ENCODE measurements at regions of chr3 and their contacts with region 1.

Region 1: GRCh38 chr3:152444029-152444641 is 175.4 kb downstream of the MBNL1 start:
- DNase-seq: peak; percentile 27
- H3K4me3 ChIP-seq: no peak overlapping the region; a peak in 1 of 4 replicates
- H3K27ac ChIP-seq: peak overlapping the region in 1 of 2 experiments; percentile 54; a peak in 2 of 4 replicates
- H3K4me1 ChIP-seq: peaks cover 0 to 19% of the 10 kb centered on the region in 2 experiments; a peak in 2 of 4 replicates
- H3K27me3 ChIP-seq: no peaks in the 10 kb centered on the region
- CTCF ChIP-seq: peak; percentile 81
- EP300 ChIP-seq: no peak
- RAD21 ChIP-seq: peak; percentile 91

Region 2: GRCh38 chr3:152071924-152072323 is 372.2 kb before region 1 on chr3:
- CTCF ChIA-PET with region 1: interaction called, 35 read pairs
- POLR2A ChIA-PET with region 1: no interaction called
- DNase-seq: peak; percentile 20
- H3K4me3 ChIP-seq: no peak overlapping the region
- H3K27ac ChIP-seq: no peak overlapping the region
- H3K4me1 ChIP-seq: peaks cover 0 to 3% of the 10 kb centered on the region in 2 experiments; a peak in 1 of 4 replicates
- H3K27me3 ChIP-seq: no peaks in the 10 kb centered on the region
- CTCF ChIP-seq: peak; percentile 45; the same call in 1 of the 2 replicates
- EP300 ChIP-seq: no peak
- RAD21 ChIP-seq: peak; percentile 66

Region 3: DNA sequence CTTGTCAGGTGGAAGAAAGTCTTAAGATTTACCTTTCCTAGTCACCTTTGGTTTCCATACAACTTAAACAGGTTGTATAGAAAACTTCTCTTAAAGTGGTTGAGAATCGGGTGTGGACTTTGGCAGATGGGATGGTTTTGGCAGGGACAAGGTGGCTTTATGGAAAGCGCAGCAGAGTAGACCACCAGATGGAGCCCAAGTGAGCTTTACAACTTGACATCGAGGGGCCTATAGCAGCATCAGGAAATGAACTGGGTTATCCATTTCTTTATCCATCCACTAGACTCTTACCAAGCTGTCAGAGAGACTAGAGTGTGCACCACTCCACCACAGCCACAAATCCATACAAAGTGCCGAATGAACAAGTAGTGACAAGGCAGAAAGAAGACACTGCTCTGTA is 260.7 kb before region 1 on chr3:
- CTCF ChIA-PET with region 1: interaction called, 143 read pairs
- POLR2A ChIA-PET with region 1: interaction called, 5 read pairs
- DNase-seq: peak; percentile 34
- H3K4me3 ChIP-seq: no peak overlapping the region; a peak in 1 of 4 replicates
- H3K27ac ChIP-seq: no peak overlapping the region
- H3K4me1 ChIP-seq: peaks cover 0 to 12% of the 10 kb centered on the region in 2 experiments; a peak in 2 of 4 replicates
- H3K27me3 ChIP-seq: no peaks in the 10 kb centered on the region
- CTCF ChIP-seq: peak; percentile 58
- EP300 ChIP-seq: no peak
- RAD21 ChIP-seq: peak; percentile 77

Region 4: GRCh38 chr3:152430223-152431002 is 13.7 kb before region 1 on chr3:
- CTCF ChIA-PET with region 1: interaction called, 16 read pairs
- POLR2A ChIA-PET with region 1: no interaction called
- DNase-seq: no peak
- H3K4me3 ChIP-seq: no peak overlapping the region; a peak in 1 of 4 replicates
- H3K27ac ChIP-seq: peak overlapping the region; percentile 63 to 64; a peak in 2 of 4 replicates
- H3K4me1 ChIP-seq: peaks cover 10 to 14% of the 10 kb centered on the region in 2 experiments
- H3K27me3 ChIP-seq: no peaks in the 10 kb centered on the region
- CTCF ChIP-seq: no peak
- EP300 ChIP-seq: peak in 1 of 2 experiments; percentile 30; a peak in 1 of 4 replicates
- RAD21 ChIP-seq: no peak

Region 5: GRCh38 chr3:152471814-152472671 is 27.9 kb after region 1 on chr3:
- CTCF ChIA-PET with region 1: interaction called, 12 read pairs
- POLR2A ChIA-PET with region 1: no interaction called
- DNase-seq: peak; percentile 49
- H3K4me3 ChIP-seq: peak overlapping the region in 1 of 2 experiments; percentile 14; a peak in 2 of 4 replicates
- H3K27ac ChIP-seq: no peak overlapping the region; a peak in 1 of 4 replicates
- H3K4me1 ChIP-seq: peaks cover 0 to 3% of the 10 kb centered on the region in 2 experiments; a peak in 1 of 4 replicates
- H3K27me3 ChIP-seq: no peaks in the 10 kb centered on the region
- CTCF ChIP-seq: peak; percentile 80
- EP300 ChIP-seq: no peak
- RAD21 ChIP-seq: peak; percentile 71

Measured in SK-N-SH (cell line).